ENCODE measurements at regions of chr2 and their contacts with region 1.

Region 1: GRCh38 chr2:62660582-62661262 is 44.8 kb upstream of the EHBP1 start:
- DNase-seq: peak; percentile 87
- H3K4me3 Mint-ChIP-seq: peak overlapping the region; percentile 46
- H3K27ac Mint-ChIP-seq: peak overlapping the region; percentile 91
- H3K4me1 Mint-ChIP-seq: peaks cover 60% of the 10 kb centered on the region
- H3K27me3 Mint-ChIP-seq: no peaks in the 10 kb centered on the region
- CTCF ChIP-seq: no peak

Region 2: DNA sequence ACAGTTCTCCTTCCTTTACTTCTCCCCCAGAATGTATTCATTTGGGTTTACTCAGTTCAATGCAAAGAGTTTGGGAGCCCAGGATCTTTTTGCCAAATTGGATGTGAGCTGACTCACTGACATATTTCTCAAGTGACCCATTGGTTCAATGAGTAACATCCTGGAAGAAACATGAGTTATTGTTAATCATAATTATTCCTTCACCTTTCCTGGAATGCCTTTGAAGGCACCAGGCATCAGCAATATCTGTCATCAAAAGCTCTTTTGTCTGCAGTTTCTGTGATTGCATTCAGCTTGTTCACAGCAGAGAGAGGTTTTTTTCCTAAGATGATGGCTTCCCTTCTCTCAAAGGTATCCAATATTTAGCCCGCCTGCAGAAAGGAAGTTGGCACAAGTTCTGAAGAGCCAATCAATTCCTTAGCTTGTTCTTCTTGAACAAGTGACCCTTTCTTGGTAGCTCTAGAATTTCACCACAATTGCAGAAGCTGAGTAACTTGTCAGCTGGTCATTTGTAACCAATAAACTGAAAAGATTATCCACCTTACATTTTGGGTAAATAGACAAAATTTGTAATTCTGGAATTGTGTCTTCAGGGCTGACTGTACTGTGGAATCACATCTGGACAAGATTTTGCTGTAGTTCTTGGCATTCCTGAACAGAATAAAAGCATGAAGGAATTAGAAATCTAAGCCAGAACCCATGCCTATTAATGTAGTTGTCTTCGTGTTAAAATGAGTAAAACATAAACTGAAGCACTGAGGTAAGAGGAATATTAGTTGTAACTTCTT is 82.5 kb before region 1 on chr2:
- CTCF ChIA-PET with region 1: no interaction called
- POLR2A ChIA-PET with region 1: interaction called, 15 read pairs
- intact Hi-C with region 1: loop called (anchors 2 kb)
- DNase-seq: peak; percentile 94
- H3K4me3 Mint-ChIP-seq: peak overlapping the region; percentile 10
- H3K27ac Mint-ChIP-seq: peak overlapping the region; percentile 90
- H3K4me1 Mint-ChIP-seq: peaks cover 19% of the 10 kb centered on the region
- H3K27me3 Mint-ChIP-seq: no peaks in the 10 kb centered on the region
- CTCF ChIP-seq: no peak

Region 3: DNA sequence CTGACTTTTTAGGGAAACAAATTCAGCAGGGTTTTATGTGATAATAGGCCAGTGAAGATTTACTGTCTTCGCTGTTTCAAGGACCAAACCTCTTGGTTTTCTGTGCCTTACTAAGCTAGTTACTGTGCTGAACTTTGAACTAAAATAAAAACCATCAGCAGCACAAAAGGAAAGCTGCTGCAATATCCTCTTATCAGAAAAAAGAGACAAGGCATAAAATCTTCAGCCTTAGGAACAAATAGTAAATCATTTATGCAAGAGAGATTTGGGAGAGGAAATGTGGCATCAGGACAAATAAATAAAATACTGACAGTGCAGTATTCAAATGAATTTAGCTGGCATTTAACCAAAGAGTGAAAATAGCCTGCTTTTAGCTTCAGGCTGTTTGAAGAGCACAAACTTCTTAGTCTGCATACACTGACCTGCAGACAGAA is 19.3 kb before region 1 on chr2:
- CTCF ChIA-PET with region 1: no interaction called
- POLR2A ChIA-PET with region 1: interaction called, 12 read pairs
- intact Hi-C with region 1: no loop called
- DNase-seq: no peak
- H3K4me3 Mint-ChIP-seq: no peak overlapping the region
- H3K27ac Mint-ChIP-seq: no peak overlapping the region
- H3K4me1 Mint-ChIP-seq: peaks cover 16% of the 10 kb centered on the region
- H3K27me3 Mint-ChIP-seq: no peaks in the 10 kb centered on the region
- CTCF ChIP-seq: no peak

Region 4: DNA sequence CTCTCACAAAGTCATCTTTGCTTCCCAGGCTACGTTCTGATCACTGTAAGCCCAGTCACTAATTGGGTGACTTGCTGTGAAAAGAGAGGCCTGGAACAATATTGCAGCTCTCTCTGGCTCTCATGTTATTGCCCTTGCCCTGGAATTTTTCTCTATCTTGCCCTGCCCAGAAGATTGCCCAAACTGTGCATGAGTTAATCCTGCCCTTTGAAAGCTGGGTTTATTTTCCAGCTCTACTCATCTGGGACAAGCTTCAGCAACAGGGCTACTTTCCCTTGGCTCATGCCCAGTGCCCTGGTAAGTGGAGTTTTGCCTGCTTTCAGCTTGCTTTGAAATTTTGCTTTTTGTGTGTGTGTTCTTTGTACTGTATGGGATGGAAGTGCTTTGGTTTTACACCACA is 37.9 kb after region 1 on chr2:
- CTCF ChIA-PET with region 1: interaction called, 3 read pairs
- POLR2A ChIA-PET with region 1: interaction called, 29 read pairs
- intact Hi-C with region 1: no loop called
- DNase-seq: no peak
- H3K4me3 Mint-ChIP-seq: no peak overlapping the region
- H3K27ac Mint-ChIP-seq: no peak overlapping the region
- H3K4me1 Mint-ChIP-seq: peaks cover 6% of the 10 kb centered on the region
- H3K27me3 Mint-ChIP-seq: no peaks in the 10 kb centered on the region
- CTCF ChIP-seq: no peak